ENCODE measurements at regions of chr9 and their contacts with region 1.

Region 1: DNA sequence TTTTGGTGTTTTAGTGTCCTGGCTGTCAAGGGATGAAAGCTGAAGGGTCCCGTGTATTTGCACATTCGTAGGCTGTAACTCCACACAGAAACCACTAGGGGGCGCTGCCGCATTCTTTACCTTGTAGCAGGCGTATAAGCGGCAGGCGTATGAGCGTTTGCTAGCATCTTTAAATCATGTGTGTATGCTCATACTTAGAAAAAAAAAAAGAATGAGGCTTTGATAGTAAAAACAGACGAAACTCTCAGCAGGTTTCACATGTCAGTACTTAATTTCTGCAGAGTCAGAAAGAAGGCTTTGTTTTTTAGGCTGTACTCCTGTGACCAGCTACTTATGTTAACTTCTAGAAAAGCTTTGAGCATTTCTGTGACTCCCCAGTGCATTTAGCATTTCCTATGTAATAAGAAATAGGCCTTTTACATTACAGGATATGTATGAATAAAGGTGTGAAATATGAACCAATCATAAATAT is 218.8 kb upstream of the ADAMTSL1 start:
- DNase-seq: peak; percentile 82
- H3K4me3 ChIP-seq: no peak overlapping the region
- H3K27ac ChIP-seq: no peak overlapping the region
- H3K4me1 ChIP-seq: no peaks in the 10 kb centered on the region
- H3K27me3 ChIP-seq: no peaks in the 10 kb centered on the region
- CTCF ChIP-seq: peak; percentile 96

Region 2: DNA sequence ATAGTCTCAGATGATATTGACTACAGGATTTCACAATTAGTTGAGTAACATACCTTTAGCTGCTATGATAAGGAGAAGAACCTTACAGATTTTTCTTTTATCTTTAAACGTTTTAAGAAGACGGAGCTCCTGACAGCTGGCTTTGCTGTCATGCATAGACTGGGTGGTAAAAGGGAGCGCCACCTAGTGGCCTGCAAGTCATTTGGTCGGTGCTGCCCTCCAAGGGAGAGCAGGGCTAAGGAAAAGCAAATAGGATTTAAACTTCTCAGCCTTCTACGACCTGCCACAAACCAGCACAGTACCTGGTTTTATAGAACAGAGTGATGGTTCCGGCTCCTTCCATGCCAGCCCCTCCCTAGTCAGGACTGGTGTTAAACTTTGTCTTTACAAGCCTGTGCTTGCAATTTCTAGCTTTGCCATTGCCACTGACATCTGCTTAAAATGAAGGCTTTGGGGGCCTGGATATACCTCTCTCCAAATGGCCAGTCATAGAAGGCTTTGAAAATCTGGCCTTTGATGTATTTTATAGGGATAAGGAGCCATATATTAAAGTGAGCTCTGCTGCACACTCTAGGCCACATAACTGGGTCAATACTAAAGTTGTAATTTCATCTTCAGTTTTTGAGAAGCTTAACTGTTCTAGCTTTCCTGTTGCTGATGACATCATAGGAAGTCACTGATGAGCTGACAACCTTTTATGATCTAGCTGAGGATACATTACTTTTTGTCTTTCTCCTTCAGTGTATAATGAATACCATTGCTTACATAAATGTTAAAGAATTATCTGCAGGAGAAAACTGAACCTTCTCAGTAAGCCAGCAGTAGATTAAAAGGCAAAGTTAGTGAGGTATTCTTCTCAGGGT is 187.7 kb after region 1 on chr9:
- intact Hi-C with region 1: loop called (anchors 5 kb)
- DNase-seq: peak; percentile 70
- H3K4me3 ChIP-seq: no peak overlapping the region
- H3K27ac ChIP-seq: no peak overlapping the region
- H3K4me1 ChIP-seq: no peaks in the 10 kb centered on the region
- H3K27me3 ChIP-seq: no peaks in the 10 kb centered on the region
- CTCF ChIP-seq: peak; percentile 79

Region 3: DNA sequence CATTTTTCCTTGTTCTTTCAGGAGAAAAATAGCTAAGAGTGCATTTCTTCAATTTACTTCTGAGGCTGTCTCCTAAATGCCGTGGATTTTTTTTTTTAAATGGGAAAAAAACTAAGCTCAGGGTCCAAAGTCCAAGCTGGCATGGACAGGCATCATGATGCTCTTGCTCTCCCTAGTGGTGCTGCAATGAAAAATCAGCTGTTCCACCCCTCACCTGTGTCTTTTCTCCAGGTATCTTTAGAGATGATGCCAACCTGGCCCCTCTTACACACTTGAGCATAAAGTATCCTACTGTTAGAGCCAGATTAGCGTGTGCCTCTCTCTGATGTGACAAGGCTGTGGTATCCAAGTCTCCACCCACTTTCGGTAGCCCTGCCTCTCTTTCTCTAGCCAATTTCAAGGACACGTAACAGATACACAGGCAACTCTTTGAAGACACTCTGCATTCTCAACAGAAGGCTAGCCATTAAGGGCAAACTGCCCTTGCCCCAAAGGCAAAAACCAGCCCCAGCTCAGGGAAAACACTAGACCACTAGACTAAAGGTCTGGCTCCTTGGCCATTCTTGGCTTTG is 569.0 kb after region 1 on chr9:
- intact Hi-C with region 1: loop called (anchors 10 kb)
- DNase-seq: peak; percentile 41
- H3K4me3 ChIP-seq: no peak overlapping the region
- H3K27ac ChIP-seq: no peak overlapping the region
- H3K4me1 ChIP-seq: peaks cover 5% of the 10 kb centered on the region
- H3K27me3 ChIP-seq: no peaks in the 10 kb centered on the region
- CTCF ChIP-seq: peak; percentile 18